ENCODE measurements at regions of chrX and their contacts with region 1.

Region 1: GRCh38 chrX:154370882-154371770 is 3.3 kb downstream of the FLNA start:
- H3K4me3 ChIP-seq: peak overlapping the region; percentile 68
- H3K27ac ChIP-seq: peak overlapping the region; percentile 93
- H3K4me1 ChIP-seq: peaks cover 16% of the 10 kb centered on the region
- CTCF ChIP-seq: peak; percentile 46

Region 2: DNA sequence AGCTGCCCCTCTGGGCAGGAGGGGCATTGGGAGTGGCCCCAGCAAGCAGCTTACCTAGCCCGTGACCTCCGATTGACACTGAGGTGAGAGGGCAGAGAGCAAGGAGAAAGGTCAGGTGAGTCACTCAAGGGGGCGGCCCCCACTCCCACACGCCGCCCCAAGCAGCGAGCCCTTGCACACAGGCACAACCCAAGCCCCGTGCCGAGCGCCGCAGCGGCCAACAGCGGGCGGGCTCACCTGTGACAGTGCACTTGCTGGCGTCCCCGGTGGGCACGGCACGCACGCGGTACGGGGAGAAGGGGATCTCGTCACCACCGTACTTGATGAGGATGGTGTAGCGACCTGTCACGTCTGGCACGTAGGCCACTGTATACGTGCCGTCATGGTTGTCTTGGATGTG is 13.9 kb before region 1 on chrX:
- CTCF ChIA-PET with region 1: no interaction called
- POLR2A ChIA-PET with region 1: interaction called, 26 read pairs
- H3K4me3 ChIP-seq: no peak overlapping the region
- H3K27ac ChIP-seq: no peak overlapping the region
- H3K4me1 ChIP-seq: no peaks in the 10 kb centered on the region
- CTCF ChIP-seq: no peak

Region 3: GRCh38 chrX:154397819-154398724 is 26.9 kb after region 1 on chrX and contains the start of gene RPL10:
- CTCF ChIA-PET with region 1: interaction called, 3 read pairs
- POLR2A ChIA-PET with region 1: interaction called, 39 read pairs
- H3K4me3 ChIP-seq: peak within 1 kb of the TSS; percentile 66
- H3K27ac ChIP-seq: peak within 1 kb of the TSS; percentile 84
- H3K4me1 ChIP-seq: no peaks in the 10 kb centered on the region
- CTCF ChIP-seq: no peak

Region 4: GRCh38 chrX:154458114-154458953 is 87.2 kb after region 1 on chrX and contains the start of gene PLXNA3:
- CTCF ChIA-PET with region 1: interaction called, 5 read pairs
- POLR2A ChIA-PET with region 1: interaction called, 14 read pairs
- H3K4me3 ChIP-seq: peak within 1 kb of the TSS; percentile 70
- H3K27ac ChIP-seq: peak within 1 kb of the TSS; percentile 75
- H3K4me1 ChIP-seq: no peaks in the 10 kb centered on the region
- CTCF ChIP-seq: no peak

Region 5: GRCh38 chrX:155211206-155211605 is 840.1 kb after region 1 on chrX:
- CTCF ChIA-PET with region 1: no interaction called
- POLR2A ChIA-PET with region 1: no interaction called
- H3K4me3 ChIP-seq: no peak overlapping the region
- H3K27ac ChIP-seq: no peak overlapping the region
- H3K4me1 ChIP-seq: 0 out of 2 replicates have a peak, but pooled peaks cover 3% of the 10 kb centered on the region
- CTCF ChIP-seq: no peak